CD4-positive, alpha-beta T cell (primary cell): ENCODE measurements at regions of chr16 and their contacts with region 1.

Region 1: DNA sequence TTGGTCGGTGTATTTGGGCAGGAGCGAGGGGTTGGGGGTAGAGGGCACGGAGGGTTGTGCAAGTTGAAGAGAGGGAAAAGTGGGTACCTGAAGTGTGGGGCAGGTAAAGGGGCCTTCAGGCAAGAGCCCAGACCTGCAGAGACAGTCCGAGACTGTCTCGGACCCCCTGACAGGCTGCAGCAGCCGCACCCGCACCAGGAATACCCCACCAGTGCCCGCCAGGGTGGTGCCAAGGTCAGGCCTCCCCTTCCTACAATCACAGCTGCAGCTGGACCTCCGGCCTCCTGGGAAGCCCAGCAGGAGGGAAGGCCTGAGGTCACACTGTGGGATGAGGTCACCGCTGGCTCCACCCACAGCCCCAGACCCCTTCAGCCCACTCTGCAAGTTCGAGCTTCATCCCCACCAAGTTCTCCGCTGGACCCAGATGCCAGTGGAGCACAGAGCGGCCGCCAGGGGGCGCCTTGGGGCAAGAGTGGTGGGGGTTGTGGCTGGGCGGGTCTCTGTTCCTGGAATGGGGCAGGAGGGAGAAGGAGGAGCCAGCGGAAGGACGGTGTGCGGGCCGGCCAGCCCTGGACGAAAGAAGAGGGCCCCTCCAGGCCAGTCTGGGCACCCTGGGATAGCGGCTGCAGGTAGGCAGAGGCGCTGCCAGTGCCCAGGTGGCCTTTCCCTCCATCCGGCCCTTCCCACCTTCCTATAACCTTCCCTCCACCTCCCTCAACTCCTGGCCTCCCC is at the start of gene HSD3B7:
- DNase-seq: peak; percentile 64 to 87 (median 78)
- ATAC-seq: peak; percentile 74
- H3K4me3 ChIP-seq: no peak within 1 kb of the TSS
- H3K4me3 Mint-ChIP-seq: no peak within 1 kb of the TSS
- H3K27ac ChIP-seq: no peak within 1 kb of the TSS
- H3K27ac Mint-ChIP-seq: no peak within 1 kb of the TSS
- H3K4me1 ChIP-seq: peaks cover 13% of the 10 kb centered on the region
- H3K4me1 Mint-ChIP-seq: no peaks in the 10 kb centered on the region
- H3K27me3 ChIP-seq: no peaks in the 10 kb centered on the region
- H3K27me3 Mint-ChIP-seq: no peaks in the 10 kb centered on the region
- CTCF ChIP-seq: peak; percentile 85
- total RNA-seq, gene HSD3B7: 0.11 TPM in 1 of 2 experiments, not detected in the other

Region 2: GRCh38 chr16:30875871-30876801 is 108.7 kb before region 1 on chr16:
- CTCF ChIA-PET with region 1: no interaction called
- POLR2A ChIA-PET with region 1: no interaction called
- intact Hi-C with region 1: no loop called
- DNase-seq: peak in 7 of 14 experiments; percentile 10 to 71 (median 43)
- ATAC-seq: peak; percentile 19
- H3K4me3 ChIP-seq: peak overlapping the region; percentile 98
- H3K4me3 Mint-ChIP-seq: peak overlapping the region; percentile 96
- H3K27ac ChIP-seq: peak overlapping the region; percentile 88 to 93
- H3K27ac Mint-ChIP-seq: peak overlapping the region; percentile 98
- H3K4me1 ChIP-seq: peaks cover 37% of the 10 kb centered on the region
- H3K4me1 Mint-ChIP-seq: peaks cover 30% of the 10 kb centered on the region
- H3K27me3 ChIP-seq: no peaks in the 10 kb centered on the region
- H3K27me3 Mint-ChIP-seq: no peaks in the 10 kb centered on the region
- CTCF ChIP-seq: no peak

Region 3: GRCh38 chr16:31032736-31033708 is 48.2 kb after region 1 on chr16 and contains the start of gene STX4:
- CTCF ChIA-PET with region 1: interaction called, 5 read pairs
- POLR2A ChIA-PET with region 1: no interaction called
- intact Hi-C with region 1: loop called in 1 of 2 experiments (anchors 2 kb)
- DNase-seq: peak; percentile 93 to 100 (median 96)
- ATAC-seq: peak; percentile 81
- H3K4me3 ChIP-seq: peak within 1 kb of the TSS; percentile 95
- H3K4me3 Mint-ChIP-seq: peak within 1 kb of the TSS; percentile 97
- H3K27ac ChIP-seq: peak within 1 kb of the TSS; percentile 93 to 96
- H3K27ac Mint-ChIP-seq: peak within 1 kb of the TSS; percentile 83
- H3K4me1 ChIP-seq: peaks cover 26% of the 10 kb centered on the region
- H3K4me1 Mint-ChIP-seq: peaks cover 27% of the 10 kb centered on the region
- H3K27me3 ChIP-seq: no peaks in the 10 kb centered on the region
- H3K27me3 Mint-ChIP-seq: no peaks in the 10 kb centered on the region
- CTCF ChIP-seq: no peak
- total RNA-seq, gene STX4: 54.1 to 55.2 TPM

Region 4: DNA sequence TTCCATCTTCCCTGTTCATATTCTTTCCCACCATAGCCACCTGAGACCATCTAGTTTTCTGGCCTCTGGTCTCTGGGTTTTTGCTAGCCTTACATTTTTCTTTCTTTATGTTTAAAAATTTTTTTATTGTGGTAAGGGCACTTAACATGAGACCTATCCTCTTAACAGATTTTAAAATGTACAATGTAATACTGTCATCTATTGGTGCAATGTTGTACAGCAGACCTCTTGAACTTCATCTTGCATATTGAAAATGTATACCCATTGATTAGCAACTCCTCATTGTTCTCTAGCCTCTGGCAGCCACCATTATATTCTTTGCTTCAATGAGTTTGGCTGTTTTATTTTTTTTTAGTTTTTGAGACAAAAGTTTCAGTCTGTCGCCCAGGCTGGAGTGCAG is 314.1 kb after region 1 on chr16:
- CTCF ChIA-PET with region 1: no interaction called
- POLR2A ChIA-PET with region 1: no interaction called
- intact Hi-C with region 1: loop called in 1 of 2 experiments (anchors 10 kb)
- DNase-seq: peak in 1 of 14 experiments; percentile 10
- ATAC-seq: no peak
- H3K4me3 ChIP-seq: no peak overlapping the region
- H3K4me3 Mint-ChIP-seq: no peak overlapping the region
- H3K27ac ChIP-seq: no peak overlapping the region
- H3K27ac Mint-ChIP-seq: no peak overlapping the region
- H3K4me1 ChIP-seq: no peaks in the 10 kb centered on the region
- H3K4me1 Mint-ChIP-seq: no peaks in the 10 kb centered on the region
- H3K27me3 ChIP-seq: no peaks in the 10 kb centered on the region
- H3K27me3 Mint-ChIP-seq: peaks cover 27% of the 10 kb centered on the region
- CTCF ChIP-seq: peak; percentile 11

Region 5: GRCh38 chr16:31382485-31383161 is 397.8 kb after region 1 on chr16:
- CTCF ChIA-PET with region 1: no interaction called
- POLR2A ChIA-PET with region 1: no interaction called
- intact Hi-C with region 1: loop called in 1 of 2 experiments (anchors 5 kb)
- DNase-seq: peak; percentile 26 to 74 (median 50)
- ATAC-seq: peak; percentile 69
- H3K4me3 ChIP-seq: no peak overlapping the region
- H3K4me3 Mint-ChIP-seq: no peak overlapping the region
- H3K27ac ChIP-seq: no peak overlapping the region
- H3K27ac Mint-ChIP-seq: no peak overlapping the region
- H3K4me1 ChIP-seq: peaks cover 4% of the 10 kb centered on the region
- H3K4me1 Mint-ChIP-seq: no peaks in the 10 kb centered on the region
- H3K27me3 ChIP-seq: peaks cover 0 to 4% of the 10 kb centered on the region in 2 experiments
- H3K27me3 Mint-ChIP-seq: peaks cover 20% of the 10 kb centered on the region
- CTCF ChIP-seq: peak; percentile 53

Region 6: DNA sequence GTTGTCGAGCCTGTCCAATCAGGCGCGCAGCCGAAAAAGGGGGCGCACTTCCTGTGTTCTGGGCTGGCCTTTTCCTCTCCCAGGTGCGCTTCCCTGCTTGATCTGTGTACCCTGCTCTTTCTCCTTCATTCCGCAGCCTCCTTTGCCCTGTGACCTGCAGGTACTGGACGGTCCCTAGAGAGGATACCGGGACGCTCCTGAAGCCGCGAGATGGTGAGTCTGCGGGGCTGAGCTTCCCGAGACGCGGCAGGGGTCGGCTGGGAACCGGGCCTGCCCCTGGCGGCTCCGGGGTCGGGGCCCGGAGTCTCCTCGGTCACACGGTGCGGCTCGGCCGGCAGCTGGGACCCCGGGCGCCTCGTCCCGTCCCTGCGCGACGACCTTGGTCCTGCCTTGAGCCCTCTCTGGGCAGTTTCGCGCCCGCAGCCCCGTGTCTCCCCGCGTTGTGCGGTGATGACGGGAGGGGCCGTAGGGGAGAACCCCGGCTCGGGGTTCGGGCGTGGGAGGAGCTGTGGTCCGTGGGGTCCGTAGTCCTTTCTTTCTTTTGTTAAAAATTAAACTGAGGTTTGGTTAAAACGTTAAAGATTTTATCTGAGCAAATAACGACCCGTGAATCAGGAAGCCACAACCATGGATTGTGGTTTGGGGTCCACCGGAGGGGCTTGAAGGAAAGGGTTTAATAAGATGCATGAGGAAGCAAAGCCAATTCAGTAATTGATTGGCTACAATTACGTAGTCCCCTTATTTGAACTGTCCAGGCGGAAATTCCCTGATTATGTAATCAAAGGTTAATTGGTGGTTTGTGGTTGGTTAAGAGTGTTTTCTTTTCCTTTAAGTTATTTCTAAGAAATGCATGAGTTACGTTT is 715.9 kb after region 1 on chr16:
- CTCF ChIA-PET with region 1: no interaction called
- POLR2A ChIA-PET with region 1: no interaction called
- intact Hi-C with region 1: loop called in 1 of 2 experiments (anchors 10 kb)
- DNase-seq: peak; percentile 67 to 93 (median 80)
- ATAC-seq: peak; percentile 72
- H3K4me3 ChIP-seq: peak overlapping the region; percentile 89
- H3K4me3 Mint-ChIP-seq: peak overlapping the region; percentile 96
- H3K27ac ChIP-seq: peak overlapping the region; percentile 88 to 92
- H3K27ac Mint-ChIP-seq: peak overlapping the region; percentile 99
- H3K4me1 ChIP-seq: peaks cover 45% of the 10 kb centered on the region
- H3K4me1 Mint-ChIP-seq: peaks cover 37% of the 10 kb centered on the region
- H3K27me3 ChIP-seq: no peaks in the 10 kb centered on the region
- H3K27me3 Mint-ChIP-seq: no peaks in the 10 kb centered on the region
- CTCF ChIP-seq: no peak